ENCODE measurements at regions of chr3 and their contacts with region 1.

Region 1: GRCh38 chr3:119463171-119464169 is at the start of gene TMEM39A:
- DNase-seq: peak; percentile 99
- ATAC-seq: peak; percentile 97
- H3K4me3 Mint-ChIP-seq: peak within 1 kb of the TSS; percentile 100
- H3K27ac Mint-ChIP-seq: peak within 1 kb of the TSS; percentile 97
- H3K4me1 Mint-ChIP-seq: peaks cover 20% of the 10 kb centered on the region
- H3K27me3 Mint-ChIP-seq: no peaks in the 10 kb centered on the region
- CTCF ChIP-seq: no peak
- total RNA-seq, gene TMEM39A: 44.5 to 48.9 TPM (median 46.7 TPM) in 3 replicates

Region 2: GRCh38 chr3:119293871-119294695 is 169.4 kb before region 1 on chr3 and contains the start of gene ARHGAP31:
- CTCF ChIA-PET with region 1: no interaction called
- POLR2A ChIA-PET with region 1: no interaction called
- DNase-seq: peak; percentile 63
- ATAC-seq: peak; percentile 57
- H3K4me3 Mint-ChIP-seq: peak within 1 kb of the TSS; percentile 81
- H3K27ac Mint-ChIP-seq: no peak within 1 kb of the TSS
- H3K4me1 Mint-ChIP-seq: peaks cover 42% of the 10 kb centered on the region
- H3K27me3 Mint-ChIP-seq: peaks cover 13% of the 10 kb centered on the region
- CTCF ChIP-seq: no peak
- total RNA-seq, gene ARHGAP31: 3.7 to 7.2 TPM (median 4.2 TPM) in 3 replicates

Region 3: DNA sequence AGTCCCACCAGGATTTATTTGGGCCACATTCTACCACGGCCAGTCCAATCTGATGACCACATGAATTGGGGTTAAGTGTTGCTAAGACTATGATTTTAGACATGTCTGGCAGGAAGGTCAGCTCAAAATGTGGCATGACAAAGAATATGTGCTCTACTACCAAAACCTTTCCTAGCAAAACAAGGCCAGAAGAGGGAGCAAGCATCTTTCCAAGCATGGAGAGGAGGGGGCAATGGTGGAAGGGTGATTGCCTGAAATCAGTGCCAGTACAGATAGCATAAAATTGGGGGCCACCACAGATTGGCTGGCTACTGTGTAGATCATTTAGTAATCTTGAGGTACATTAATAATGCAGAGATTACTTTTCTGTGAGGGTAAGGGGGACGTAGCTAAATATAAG is 43.3 kb before region 1 on chr3:
- CTCF ChIA-PET with region 1: no interaction called
- POLR2A ChIA-PET with region 1: no interaction called
- DNase-seq: no peak
- ATAC-seq: peak; percentile 93
- H3K4me3 Mint-ChIP-seq: no peak overlapping the region
- H3K27ac Mint-ChIP-seq: no peak overlapping the region
- H3K4me1 Mint-ChIP-seq: no peaks in the 10 kb centered on the region
- H3K27me3 Mint-ChIP-seq: peaks cover under 1% of the 10 kb centered on the region; the same call in 1 of the 2 replicates
- CTCF ChIP-seq: no peak

Region 4: GRCh38 chr3:119498186-119498987 is 34.9 kb after region 1 on chr3 and contains the start of gene TIMMDC1:
- CTCF ChIA-PET with region 1: interaction called, 4 read pairs
- POLR2A ChIA-PET with region 1: interaction called, 17 read pairs
- DNase-seq: peak; percentile 97
- ATAC-seq: peak; percentile 94
- H3K4me3 Mint-ChIP-seq: peak within 1 kb of the TSS; percentile 99
- H3K27ac Mint-ChIP-seq: peak within 1 kb of the TSS; percentile 99
- H3K4me1 Mint-ChIP-seq: peaks cover 11% of the 10 kb centered on the region
- H3K27me3 Mint-ChIP-seq: no peaks in the 10 kb centered on the region
- CTCF ChIP-seq: no peak
- total RNA-seq, gene TIMMDC1: 114 to 121 TPM (median 116 TPM) in 3 replicates